ENCODE measurements at regions of chr6 and their contacts with region 1.

Region 1: GRCh38 chr6:33570806-33571636 is 9.1 kb downstream of the BAK1 start:
- DNase-seq: peak; percentile 98
- ATAC-seq: peak; percentile 90
- H3K4me3 Mint-ChIP-seq: peak overlapping the region; percentile 81
- H3K27ac Mint-ChIP-seq: peak overlapping the region; percentile 100
- H3K4me1 Mint-ChIP-seq: peaks cover 42% of the 10 kb centered on the region
- H3K27me3 Mint-ChIP-seq: no peaks in the 10 kb centered on the region

Region 2: DNA sequence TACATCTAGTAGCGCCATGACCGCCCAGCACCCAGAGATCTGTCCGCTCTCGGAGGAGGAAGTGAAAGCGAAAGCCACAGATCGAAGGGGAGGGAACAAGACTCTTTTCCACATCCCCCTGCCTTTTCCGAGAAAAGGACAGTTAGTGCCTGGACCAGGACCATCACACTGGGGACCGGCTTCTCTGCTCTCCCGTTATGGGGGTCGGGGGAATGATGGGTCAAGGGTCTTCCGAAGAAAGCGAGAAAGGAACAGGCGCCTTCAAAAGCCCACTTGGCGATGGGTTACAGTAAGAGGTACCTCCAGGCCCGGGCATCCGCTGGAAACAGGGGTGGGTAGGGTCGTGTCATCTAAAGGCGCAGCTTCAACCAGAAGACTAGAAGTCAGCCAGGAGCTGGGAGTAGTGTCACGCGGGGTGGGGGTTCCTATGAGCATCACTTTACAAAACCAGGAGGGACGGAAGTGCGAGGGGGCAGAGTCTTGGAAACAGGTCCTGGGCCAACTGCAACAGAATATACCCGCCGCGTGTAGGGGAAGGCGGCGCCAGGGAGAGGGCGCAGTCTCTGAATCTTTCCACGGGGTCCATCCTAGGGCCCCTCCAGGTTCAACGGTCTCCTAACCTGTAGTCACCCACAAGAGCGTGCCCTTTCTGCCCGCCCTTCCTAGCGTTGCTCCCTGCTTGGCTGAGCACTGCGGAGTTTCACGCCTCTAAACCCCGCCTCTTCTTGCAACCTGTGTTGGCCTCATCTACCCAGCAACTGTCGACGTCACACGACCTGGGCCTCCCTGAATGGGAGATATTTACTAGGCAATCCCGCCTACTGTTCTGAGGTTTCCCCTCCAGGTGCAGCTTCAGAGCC is 726.8 kb before region 1 on chr6 and contains the start of gene PSMB8:
- CTCF ChIA-PET with region 1: no interaction called
- POLR2A ChIA-PET with region 1: no interaction called
- intact Hi-C with region 1: loop called in 1 of 2 experiments (anchors 5 kb)
- DNase-seq: peak; percentile 99
- ATAC-seq: peak; percentile 73
- H3K4me3 Mint-ChIP-seq: peak within 1 kb of the TSS; percentile 95
- H3K27ac Mint-ChIP-seq: peak within 1 kb of the TSS; percentile 97
- H3K4me1 Mint-ChIP-seq: peaks cover 66% of the 10 kb centered on the region
- H3K27me3 Mint-ChIP-seq: no peaks in the 10 kb centered on the region
- total RNA-seq, gene PSMB8: 238 to 338 TPM

Region 3: GRCh38 chr6:33335916-33336315 is 235.1 kb before region 1 on chr6:
- CTCF ChIA-PET with region 1: no interaction called
- POLR2A ChIA-PET with region 1: no interaction called
- intact Hi-C with region 1: no loop called
- DNase-seq: no peak
- ATAC-seq: no peak
- H3K4me3 Mint-ChIP-seq: no peak overlapping the region
- H3K27ac Mint-ChIP-seq: no peak overlapping the region
- H3K4me1 Mint-ChIP-seq: peaks cover 11% of the 10 kb centered on the region
- H3K27me3 Mint-ChIP-seq: no peaks in the 10 kb centered on the region

Region 4: DNA sequence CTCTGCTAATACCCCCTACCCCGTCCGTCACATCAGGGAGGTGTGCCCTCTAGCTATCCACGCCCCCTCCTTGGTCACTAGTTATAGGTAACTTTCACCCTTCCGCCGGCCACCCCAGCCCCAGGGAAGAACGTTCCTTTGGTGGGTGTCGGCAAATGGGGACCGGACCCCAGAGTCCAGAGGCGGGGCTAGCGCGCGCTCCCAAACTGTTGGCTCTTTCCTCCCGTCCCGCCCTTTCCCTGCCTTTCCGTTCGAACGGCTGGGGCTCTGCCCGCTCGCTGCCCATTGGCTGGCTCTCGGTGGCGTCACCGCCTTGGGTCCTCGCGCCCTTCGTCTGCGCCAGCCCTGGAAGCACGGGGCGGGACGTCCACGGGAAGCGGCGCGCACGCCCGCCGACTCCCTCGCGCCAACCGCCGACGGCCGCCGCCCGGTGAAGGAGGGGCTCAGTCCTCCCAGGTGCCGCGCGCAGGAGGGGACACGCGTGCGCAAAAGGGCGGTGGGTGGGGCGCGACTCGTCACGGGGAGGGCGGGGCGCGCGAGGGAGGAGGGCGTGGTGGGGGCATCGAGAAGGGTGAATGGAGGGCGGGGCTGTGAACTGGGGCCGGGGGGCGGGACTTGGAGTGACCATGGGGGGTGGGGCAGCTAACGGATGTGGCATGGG is 160.8 kb before region 1 on chr6:
- CTCF ChIA-PET with region 1: no interaction called
- POLR2A ChIA-PET with region 1: no interaction called
- intact Hi-C with region 1: loop called (anchors 1 to 2 kb)
- DNase-seq: peak; percentile 98
- ATAC-seq: peak; percentile 88
- H3K4me3 Mint-ChIP-seq: peak overlapping the region; percentile 80
- H3K27ac Mint-ChIP-seq: peak overlapping the region; percentile 96
- H3K4me1 Mint-ChIP-seq: peaks cover 31% of the 10 kb centered on the region
- H3K27me3 Mint-ChIP-seq: no peaks in the 10 kb centered on the region

Region 5: DNA sequence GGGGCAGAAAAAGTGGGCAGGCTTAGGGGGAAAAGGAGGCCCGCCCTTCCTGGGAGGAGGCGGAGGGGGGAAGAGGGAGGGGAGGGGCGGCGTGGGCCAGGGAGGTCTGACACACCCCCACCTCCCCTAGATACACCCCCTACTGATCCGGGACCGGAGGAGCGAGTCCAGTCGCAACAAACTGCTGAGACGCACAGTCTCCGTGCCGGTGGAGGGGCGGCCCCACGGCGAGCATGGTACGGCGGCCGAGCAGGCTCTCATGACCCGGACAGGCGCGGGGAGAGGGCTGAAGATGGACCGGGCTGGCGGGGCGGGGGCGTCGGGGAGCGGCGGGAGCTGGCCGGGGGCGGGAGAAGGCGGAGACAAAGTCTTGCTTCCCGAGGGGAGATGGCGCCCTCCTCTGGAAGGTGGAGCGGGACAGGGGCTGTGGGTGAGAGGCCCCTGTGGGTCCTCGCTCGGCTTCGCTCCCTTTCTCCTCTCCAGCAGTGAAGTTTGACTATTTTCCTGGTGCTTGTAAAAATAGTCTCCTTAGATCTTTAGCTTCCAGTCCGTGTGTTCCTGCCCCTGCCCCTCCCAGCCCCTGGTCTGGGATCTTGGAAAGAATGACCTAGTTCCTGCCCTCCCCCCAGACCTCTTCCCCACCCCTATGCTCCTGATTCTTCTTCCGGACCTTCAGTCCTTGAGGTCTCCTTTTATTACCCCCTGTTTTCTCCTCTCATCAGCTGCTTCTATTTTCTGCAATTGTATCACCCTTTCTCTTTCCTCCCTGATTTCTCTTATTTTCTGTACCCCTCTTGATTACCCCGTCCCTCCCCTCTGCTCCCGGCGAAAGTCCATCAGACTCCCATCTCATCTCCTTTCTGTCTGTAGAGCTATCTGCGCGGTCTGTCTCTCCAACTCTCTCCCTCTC is 145.1 kb before region 1 on chr6:
- CTCF ChIA-PET with region 1: interaction called, 3 read pairs
- POLR2A ChIA-PET with region 1: interaction called, 3 read pairs
- intact Hi-C with region 1: loop called in 1 of 2 experiments (anchors 2 kb)
- DNase-seq: peak; percentile 93
- ATAC-seq: peak; percentile 49
- H3K4me3 Mint-ChIP-seq: peak overlapping the region; percentile 88
- H3K27ac Mint-ChIP-seq: peak overlapping the region; percentile 90
- H3K4me1 Mint-ChIP-seq: peaks cover 65% of the 10 kb centered on the region
- H3K27me3 Mint-ChIP-seq: no peaks in the 10 kb centered on the region

Region 6: DNA sequence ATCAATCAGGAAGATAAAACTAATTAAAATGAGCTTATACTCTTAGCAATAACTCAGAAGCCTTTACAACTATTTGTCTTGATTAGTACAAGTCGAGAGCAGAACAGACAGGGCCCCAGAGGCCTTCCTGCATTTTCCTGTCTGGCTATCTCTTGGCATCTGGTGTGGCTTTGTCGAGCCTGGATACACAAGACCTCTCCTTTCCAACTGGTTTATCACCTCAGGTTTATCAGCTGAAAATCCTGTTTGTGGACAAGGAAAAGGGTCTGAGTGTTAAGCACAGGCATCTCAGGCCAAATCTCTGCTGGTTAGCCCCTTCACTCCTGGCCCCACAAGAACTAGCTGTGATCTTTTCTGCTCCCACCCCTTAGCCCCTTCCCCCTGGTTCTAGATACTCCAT is 23.5 kb before region 1 on chr6:
- CTCF ChIA-PET with region 1: interaction called, 4 read pairs
- POLR2A ChIA-PET with region 1: interaction called, 3 read pairs
- intact Hi-C with region 1: loop called in 1 of 2 experiments (anchors 1 kb)
- DNase-seq: no peak
- ATAC-seq: no peak
- H3K4me3 Mint-ChIP-seq: no peak overlapping the region
- H3K27ac Mint-ChIP-seq: no peak overlapping the region
- H3K4me1 Mint-ChIP-seq: peaks cover 20% of the 10 kb centered on the region
- H3K27me3 Mint-ChIP-seq: no peaks in the 10 kb centered on the region

Region 7: DNA sequence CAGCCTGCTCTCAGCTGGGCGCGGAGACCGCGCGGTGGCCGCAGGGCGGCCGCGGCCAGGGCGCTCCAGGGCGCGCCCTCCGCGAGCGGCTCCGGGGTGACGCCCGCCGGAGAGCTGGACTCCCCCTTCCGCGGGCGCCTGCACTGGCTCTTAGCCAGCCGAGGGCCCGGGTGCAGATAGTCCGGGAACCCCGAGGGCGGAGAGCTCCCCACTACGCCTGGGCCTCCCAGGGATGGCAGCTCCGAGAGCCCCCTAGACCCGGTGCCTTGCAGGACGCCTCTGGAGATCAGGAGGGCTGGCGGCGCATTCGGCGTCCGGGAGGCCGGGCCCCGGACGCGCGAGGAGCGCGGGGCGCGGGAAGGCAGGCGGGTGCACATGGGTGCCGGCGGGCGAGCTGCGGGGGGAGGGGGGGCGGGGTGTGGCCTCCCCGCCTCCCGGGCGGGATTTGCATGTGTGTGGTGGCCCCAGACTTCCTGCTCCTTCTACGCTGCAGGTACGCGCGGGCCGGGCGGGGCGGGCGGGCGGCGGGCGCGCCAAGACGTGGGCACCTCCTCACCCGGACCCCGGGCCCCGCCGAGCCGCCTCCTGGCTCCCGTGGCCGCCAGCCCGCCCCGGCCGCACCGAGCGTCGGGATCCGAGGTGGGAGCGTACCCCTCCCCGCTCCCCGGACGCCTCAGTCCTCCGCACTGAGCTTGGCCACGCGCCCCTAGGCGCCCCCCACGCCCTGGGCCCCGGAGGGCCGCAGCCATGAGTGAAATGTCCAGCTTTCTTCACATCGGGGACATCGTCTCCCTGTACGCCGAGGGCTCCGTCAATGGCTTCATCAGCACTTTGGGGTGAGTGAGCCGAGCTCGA is 50.1 kb after region 1 on chr6 and contains the start of gene ITPR3:
- CTCF ChIA-PET with region 1: no interaction called
- POLR2A ChIA-PET with region 1: no interaction called
- intact Hi-C with region 1: loop called (anchors 5 kb)
- DNase-seq: peak; percentile 86
- ATAC-seq: peak; percentile 85
- H3K4me3 Mint-ChIP-seq: peak within 1 kb of the TSS; percentile 94
- H3K27ac Mint-ChIP-seq: peak within 1 kb of the TSS; percentile 91
- H3K4me1 Mint-ChIP-seq: peaks cover 46% of the 10 kb centered on the region
- H3K27me3 Mint-ChIP-seq: no peaks in the 10 kb centered on the region
- total RNA-seq, gene ITPR3: 42.6 to 42.9 TPM

Region 8: GRCh38 chr6:33788694-33789549 is 217.9 kb after region 1 on chr6 and contains the start of gene LEMD2:
- CTCF ChIA-PET with region 1: no interaction called
- POLR2A ChIA-PET with region 1: no interaction called
- intact Hi-C with region 1: loop called in 1 of 2 experiments (anchors 2 kb)
- DNase-seq: peak; percentile 93
- ATAC-seq: peak; percentile 87
- H3K4me3 Mint-ChIP-seq: peak within 1 kb of the TSS; percentile 96
- H3K27ac Mint-ChIP-seq: peak within 1 kb of the TSS; percentile 99
- H3K4me1 Mint-ChIP-seq: peaks cover 47% of the 10 kb centered on the region
- H3K27me3 Mint-ChIP-seq: no peaks in the 10 kb centered on the region
- total RNA-seq, gene LEMD2: 55.2 to 61.5 TPM